MCF 10A (cell line): ENCODE measurements at regions of chr3 and their contacts with region 1.

Region 1: DNA sequence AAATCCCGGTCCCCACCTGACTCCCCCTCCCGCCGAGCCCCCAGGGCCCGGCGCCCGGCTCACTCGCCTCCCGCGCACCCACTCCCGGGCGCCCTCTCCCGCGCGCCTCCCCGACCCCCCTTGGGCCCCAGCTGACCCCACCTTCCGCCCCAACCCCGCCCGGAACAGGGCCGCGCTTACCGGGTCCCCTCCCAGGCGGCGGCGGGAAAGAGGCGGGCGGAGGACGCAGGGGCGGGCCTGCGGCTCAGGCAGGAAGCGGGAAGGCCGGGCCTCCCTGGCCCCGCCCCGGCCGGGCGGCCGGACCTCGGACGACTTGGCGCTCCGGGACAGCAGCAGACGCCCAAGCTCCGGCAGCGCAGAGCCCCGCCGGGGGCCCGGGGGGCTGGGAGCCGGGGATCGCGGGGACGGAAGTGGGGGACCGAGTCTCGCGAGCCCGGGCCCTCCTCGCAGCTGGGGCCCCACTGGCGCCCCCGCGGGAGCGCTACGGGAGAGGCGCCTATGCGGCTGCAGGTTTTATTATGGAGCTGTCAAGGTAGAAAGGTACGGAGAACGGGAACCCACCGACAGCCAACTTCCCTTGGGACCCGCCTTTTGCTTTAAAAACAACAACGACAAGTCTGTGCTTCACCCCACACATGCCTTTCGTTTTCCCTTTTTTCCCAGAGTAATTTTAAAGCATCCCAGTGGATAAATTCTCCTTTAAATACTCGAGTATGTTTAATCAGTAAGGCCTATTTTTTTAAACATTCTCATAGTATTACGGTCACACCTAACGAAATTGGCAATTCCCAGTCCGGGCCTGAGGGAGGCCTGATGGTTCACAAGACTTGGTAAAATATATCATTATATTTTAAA is at the start of gene SLC41A3:
- DNase-seq: peak; percentile 78
- H3K4me3 Mint-ChIP-seq: peak within 1 kb of the TSS; percentile 82
- H3K27ac Mint-ChIP-seq: peak within 1 kb of the TSS; percentile 89
- H3K4me1 Mint-ChIP-seq: peaks cover 15% of the 10 kb centered on the region
- H3K27me3 Mint-ChIP-seq: no peaks in the 10 kb centered on the region
- CTCF ChIP-seq: peak; percentile 53
- total RNA-seq, gene SLC41A3: 34.9 and 43.2 TPM in 2 replicates

Region 2: DNA sequence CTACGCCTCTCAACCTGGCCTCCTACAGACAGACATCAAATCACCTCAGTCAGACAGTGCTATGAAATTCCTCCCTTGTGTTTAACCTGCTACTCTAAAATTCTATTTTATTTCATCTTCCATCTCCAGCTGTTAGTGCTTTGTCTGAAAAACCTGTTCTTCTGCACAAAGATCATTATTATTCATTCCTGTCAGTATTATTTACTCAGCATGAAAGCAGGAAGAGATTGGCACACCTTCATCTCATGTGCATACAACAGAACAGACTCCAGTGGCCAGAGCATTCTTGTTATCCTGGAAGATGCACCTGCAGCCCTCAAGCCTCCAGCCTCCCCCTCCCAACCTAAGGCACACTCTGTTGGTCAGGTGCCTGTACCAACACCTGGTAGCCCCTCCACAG is 117.0 kb before region 1 on chr3:
- CTCF ChIA-PET with region 1: interaction called, 3 read pairs
- POLR2A ChIA-PET with region 1: interaction called, 3 read pairs
- intact Hi-C with region 1: loop called (anchors 5 kb)
- DNase-seq: no peak
- H3K4me3 Mint-ChIP-seq: no peak overlapping the region
- H3K27ac Mint-ChIP-seq: no peak overlapping the region
- H3K4me1 Mint-ChIP-seq: no peaks in the 10 kb centered on the region
- H3K27me3 Mint-ChIP-seq: no peaks in the 10 kb centered on the region
- CTCF ChIP-seq: no peak

Region 3: DNA sequence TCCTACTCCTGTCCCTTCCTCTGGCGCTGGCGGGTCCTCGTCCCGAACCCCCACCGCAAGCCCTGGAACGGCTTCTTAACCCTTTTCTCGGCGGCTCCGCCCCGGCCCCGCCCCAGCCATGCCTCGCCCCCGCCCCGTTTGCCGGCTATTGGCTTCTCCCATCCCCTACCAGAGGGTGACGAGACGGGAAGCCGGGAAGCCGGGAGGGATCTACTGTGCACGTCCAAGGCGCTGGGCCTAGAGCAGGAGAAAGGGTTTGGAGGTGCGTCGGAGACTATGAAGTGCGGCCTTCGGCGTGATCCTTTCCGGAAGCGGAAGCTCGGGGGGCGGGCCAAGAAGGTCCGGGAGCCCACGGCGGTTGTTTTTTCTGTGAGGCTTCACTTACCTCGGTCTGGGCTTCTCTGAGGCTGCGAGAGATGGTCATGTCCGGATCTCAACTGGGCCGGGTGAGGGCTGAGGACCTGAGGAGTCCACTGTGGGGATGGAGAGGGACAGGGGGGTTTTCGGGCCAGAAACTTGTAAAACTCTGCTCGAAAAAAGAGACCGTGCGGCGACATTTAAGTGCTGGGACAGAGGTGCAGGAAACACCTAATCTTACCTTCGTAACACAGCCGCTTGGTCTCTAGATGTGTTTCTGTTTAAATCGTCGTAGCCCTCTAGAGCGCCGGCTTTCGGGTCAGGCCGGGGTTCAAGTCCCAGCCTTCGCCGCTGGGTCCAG is 93.7 kb before region 1 on chr3:
- CTCF ChIA-PET with region 1: no interaction called
- POLR2A ChIA-PET with region 1: interaction called, 5 read pairs
- intact Hi-C with region 1: loop called (anchors 5 kb)
- DNase-seq: peak; percentile 92
- H3K4me3 Mint-ChIP-seq: peak overlapping the region; percentile 95
- H3K27ac Mint-ChIP-seq: peak overlapping the region; percentile 95
- H3K4me1 Mint-ChIP-seq: peaks cover 8% of the 10 kb centered on the region
- H3K27me3 Mint-ChIP-seq: no peaks in the 10 kb centered on the region
- CTCF ChIP-seq: no peak

Region 4: GRCh38 chr3:126487151-126487771 is 403.1 kb after region 1 on chr3:
- CTCF ChIA-PET with region 1: no interaction called
- POLR2A ChIA-PET with region 1: no interaction called
- intact Hi-C with region 1: no loop called
- DNase-seq: peak; percentile 66
- H3K4me3 Mint-ChIP-seq: no peak overlapping the region
- H3K27ac Mint-ChIP-seq: peak overlapping the region; percentile 59
- H3K4me1 Mint-ChIP-seq: peaks cover 12% of the 10 kb centered on the region
- H3K27me3 Mint-ChIP-seq: no peaks in the 10 kb centered on the region
- CTCF ChIP-seq: no peak